Activated CD4-positive, alpha-beta memory T cell treated with anti-CD3 and anti-CD28 coated beads, Interleukin-2, amount 10 ng/mL, durations not matched to agents 7 days and 5 days (primary cell): ENCODE measurements at regions of chr14 and their contacts with region 1.

Region 1: GRCh38 chr14:34043627-34044372 is 92.9 kb upstream of the EGLN3 start:
- DNase-seq: peak; percentile 92
- H3K4me3 Mint-ChIP-seq: peak overlapping the region; percentile 26
- H3K27ac Mint-ChIP-seq: peak overlapping the region; percentile 84
- H3K4me1 Mint-ChIP-seq: peaks cover 61% of the 10 kb centered on the region
- H3K27me3 Mint-ChIP-seq: peaks cover under 1% of the 10 kb centered on the region

Region 2: DNA sequence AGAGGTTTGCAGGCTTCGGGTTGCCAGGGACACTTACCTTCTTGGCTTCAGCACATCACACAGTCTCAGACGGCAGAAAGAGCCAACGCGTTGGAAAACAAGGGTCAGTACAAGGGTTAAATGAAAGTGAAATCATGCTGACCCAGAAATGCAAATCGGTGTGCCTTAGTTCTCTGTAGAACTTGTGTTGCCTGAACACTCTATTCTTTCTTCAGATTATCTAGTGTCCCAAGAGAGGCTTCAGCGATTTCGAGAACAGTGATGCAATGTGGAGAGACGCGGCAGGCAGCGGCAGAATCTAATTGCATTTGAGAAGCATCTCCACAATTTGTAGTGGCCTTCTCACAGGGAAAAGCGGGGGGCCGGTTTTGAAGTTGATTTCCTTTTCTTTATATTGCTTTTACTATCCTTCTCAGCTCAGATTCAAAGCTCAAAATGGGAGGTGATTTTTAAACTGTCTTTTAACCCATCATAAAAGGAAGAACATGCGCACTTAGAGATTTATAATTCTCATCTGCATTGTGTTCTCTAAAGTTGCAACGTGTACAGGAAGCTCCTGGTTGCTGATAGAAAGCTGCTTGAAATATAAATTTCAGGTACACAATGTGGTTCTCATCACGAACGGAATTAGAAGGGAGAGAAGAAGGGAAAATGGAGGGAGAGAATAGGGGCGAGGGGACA is 25.1 kb before region 1 on chr14:
- CTCF ChIA-PET with region 1: no interaction called
- POLR2A ChIA-PET with region 1: interaction called, 16 read pairs
- DNase-seq: no peak
- H3K4me3 Mint-ChIP-seq: peak overlapping the region; percentile 65
- H3K27ac Mint-ChIP-seq: peak overlapping the region; percentile 71
- H3K4me1 Mint-ChIP-seq: peaks cover 17% of the 10 kb centered on the region
- H3K27me3 Mint-ChIP-seq: peaks cover 8% of the 10 kb centered on the region